ENCODE measurements at regions of chr16 and their contacts with region 1.

Region 1: DNA sequence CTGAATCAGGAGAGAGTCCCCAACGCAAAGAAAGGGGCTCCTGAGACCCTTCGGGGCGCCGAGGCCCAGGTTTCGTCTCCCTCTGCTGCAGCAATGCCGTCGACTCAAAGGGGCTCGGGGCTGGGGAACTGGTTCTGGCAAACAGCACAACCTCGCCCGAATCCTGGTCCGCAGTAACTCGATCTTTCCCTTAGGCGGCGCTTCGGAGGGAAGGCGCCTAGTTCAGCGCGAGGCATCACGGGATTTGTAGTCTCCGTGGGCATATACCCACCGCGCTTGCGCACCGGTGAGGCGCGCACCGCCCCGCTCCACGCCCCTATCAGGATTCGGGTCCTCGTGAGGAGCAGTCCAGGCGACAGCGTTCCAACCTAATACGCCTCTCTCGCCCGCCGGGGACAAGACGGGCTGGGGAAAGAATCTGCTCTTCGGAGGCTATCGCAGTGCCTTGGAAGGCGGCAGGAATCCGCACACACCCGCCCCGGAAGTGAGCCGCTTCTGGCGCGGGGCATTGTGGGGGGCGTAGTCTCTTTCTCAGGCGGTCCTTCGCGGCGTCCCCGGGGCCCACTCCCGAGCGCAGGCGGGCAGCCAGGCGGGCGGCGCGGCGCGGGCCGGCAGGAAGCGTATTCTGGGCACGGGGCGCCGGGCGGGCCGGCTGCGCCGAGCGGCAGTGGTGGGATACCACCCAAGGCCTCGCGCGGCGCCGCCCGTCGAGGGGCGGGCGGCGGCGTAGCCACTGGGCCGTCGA is at the start of gene THAP11:
- DNase-seq: peak; percentile 97
- H3K4me3 ChIP-seq: peak within 1 kb of the TSS; percentile 61 to 94 (median 78)
- H3K27ac ChIP-seq: peak within 1 kb of the TSS; percentile 96 to 99 (median 99)
- H3K4me1 ChIP-seq: peaks cover 0 to 42% (median 40%) of the 10 kb centered on the region in 4 donors
- H3K27me3 ChIP-seq: no peaks in the 10 kb centered on the region
- CTCF ChIP-seq: peak; percentile 79 to 93 (median 88)
- EP300 ChIP-seq: no peak
- POLR2A ChIP-seq: no peak
- total RNA-seq, gene THAP11: 63.9 to 85.6 (median 75.2) TPM

Region 2: DNA sequence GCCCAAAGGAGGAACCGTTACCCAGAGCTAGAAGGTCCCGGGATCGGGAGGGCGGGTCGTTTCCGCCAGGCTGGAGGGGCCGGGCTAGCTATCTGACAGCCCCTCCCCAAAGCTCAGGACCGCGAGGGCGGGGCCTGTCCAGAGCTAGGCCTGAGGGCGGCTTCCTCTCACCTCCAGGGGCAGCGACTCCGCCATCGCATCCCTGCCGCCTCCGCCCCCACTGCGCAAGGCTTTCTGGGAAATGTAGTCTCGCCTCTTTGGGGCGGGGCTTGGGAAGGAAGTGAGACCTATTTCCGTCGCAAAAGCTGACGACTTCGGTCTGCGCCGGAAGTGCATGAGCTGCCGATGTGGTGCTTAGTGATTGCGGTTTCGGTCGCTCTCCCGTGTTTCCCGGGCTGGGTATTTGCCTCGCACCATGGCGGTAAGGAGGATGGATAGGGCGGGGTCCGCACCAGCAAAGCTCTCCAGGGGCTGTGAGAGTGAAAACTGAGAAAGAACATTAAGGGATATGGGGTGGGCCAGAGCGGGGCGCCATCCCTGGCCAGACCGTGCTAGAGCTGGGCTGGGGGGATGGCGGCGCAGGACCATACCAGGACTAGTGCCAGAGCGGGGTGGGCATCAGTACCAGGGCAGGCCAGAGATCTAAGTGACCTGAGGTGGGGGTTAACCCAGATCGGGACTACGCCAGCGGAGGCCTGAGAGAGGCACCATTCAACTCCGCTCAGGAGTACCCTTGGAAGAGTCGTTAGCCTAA is 615.0 kb before region 1 on chr16 and contains the start of gene TMEM208:
- intact Hi-C with region 1: loop called (anchors 5 kb)
- DNase-seq: peak; percentile 99
- H3K4me3 ChIP-seq: peak within 1 kb of the TSS; percentile 86 to 99 (median 90)
- H3K27ac ChIP-seq: peak within 1 kb of the TSS; percentile 81 to 85 (median 83)
- H3K4me1 ChIP-seq: peaks cover 0 to 26% (median 21%) of the 10 kb centered on the region in 4 donors
- H3K27me3 ChIP-seq: no peaks in the 10 kb centered on the region
- CTCF ChIP-seq: peak in 1 of 4 experiments; percentile 7
- EP300 ChIP-seq: peak in 1 of 4 donors; percentile 46
- POLR2A ChIP-seq: peak; percentile 73 to 83
- total RNA-seq, gene TMEM208: 15.3 to 31.4 (median 24.2) TPM

Region 3: GRCh38 chr16:67806428-67807147 is 35.3 kb before region 1 on chr16 and contains the starts of genes RANBP10 and TSNAXIP1:
- intact Hi-C with region 1: loop called (anchors 2 kb)
- DNase-seq: peak; percentile 99
- H3K4me3 ChIP-seq: peak within 1 kb of the TSS; percentile 83 to 99 (median 96)
- H3K27ac ChIP-seq: peak within 1 kb of the TSS; percentile 80 to 92 (median 86)
- H3K4me1 ChIP-seq: peaks cover 0 to 28% (median 22%) of the 10 kb centered on the region in 4 donors
- H3K27me3 ChIP-seq: no peaks in the 10 kb centered on the region
- CTCF ChIP-seq: no peak
- EP300 ChIP-seq: no peak
- POLR2A ChIP-seq: peak; percentile 39 to 75
- total RNA-seq, gene RANBP10: 7.1 to 10.0 (median 7.6) TPM
- total RNA-seq, gene TSNAXIP1: 1.1 to 2.9 (median 1.8) TPM

Region 4: DNA sequence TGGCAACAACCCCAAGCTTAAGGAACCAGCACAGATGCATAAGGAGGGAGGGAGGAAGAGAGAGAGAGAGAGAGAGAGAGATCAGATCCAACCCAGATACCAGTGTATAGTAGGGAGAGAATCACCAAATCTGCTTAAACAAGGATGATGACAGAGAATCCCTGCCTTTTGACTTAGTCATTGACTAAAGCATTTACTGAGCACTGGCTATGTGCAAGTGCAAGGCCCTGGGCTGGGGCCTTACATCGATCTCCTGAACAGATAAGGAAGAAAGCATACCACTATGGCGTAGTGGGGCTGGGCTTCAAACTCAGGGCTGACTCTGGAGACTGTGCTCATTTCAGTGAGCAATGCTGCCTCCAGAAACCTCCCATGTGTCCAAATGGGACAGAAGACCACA is 19.4 kb before region 1 on chr16:
- intact Hi-C with region 1: no loop called
- DNase-seq: no peak
- H3K4me3 ChIP-seq: no peak overlapping the region
- H3K27ac ChIP-seq: no peak overlapping the region
- H3K4me1 ChIP-seq: no peaks in the 10 kb centered on the region
- H3K27me3 ChIP-seq: no peaks in the 10 kb centered on the region
- CTCF ChIP-seq: no peak
- EP300 ChIP-seq: no peak
- POLR2A ChIP-seq: no peak

Region 5: DNA sequence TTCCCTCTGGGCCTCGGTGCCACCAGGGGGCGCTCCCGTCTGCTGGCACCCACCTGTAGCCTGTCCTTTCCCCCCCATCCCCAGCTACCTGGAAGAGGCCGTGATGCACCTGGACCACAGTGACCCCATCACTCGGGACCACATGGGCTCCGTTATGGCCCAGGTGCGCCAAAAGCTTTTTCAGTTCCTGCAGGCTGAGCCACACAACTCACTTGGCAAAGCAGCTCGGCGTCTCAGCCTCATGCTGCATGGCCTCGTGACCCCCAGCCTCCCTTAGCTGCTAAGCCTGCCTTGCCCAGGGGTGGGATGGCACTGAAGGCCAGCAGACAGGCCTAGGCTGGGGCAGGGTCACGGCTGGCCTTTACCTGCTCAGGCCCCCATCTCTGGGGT is 41.9 kb after region 1 on chr16:
- intact Hi-C with region 1: loop called (anchors 2 kb)
- DNase-seq: peak; percentile 80
- H3K4me3 ChIP-seq: no peak overlapping the region
- H3K27ac ChIP-seq: peak overlapping the region; percentile 64 to 70 (median 68)
- H3K4me1 ChIP-seq: peaks cover 0 to 13% (median 9%) of the 10 kb centered on the region in 4 donors
- H3K27me3 ChIP-seq: no peaks in the 10 kb centered on the region
- CTCF ChIP-seq: peak; percentile 76 to 91 (median 86)
- EP300 ChIP-seq: no peak
- POLR2A ChIP-seq: no peak

Region 6: GRCh38 chr16:67892899-67893742 is 51.2 kb after region 1 on chr16 and contains the start of gene PSKH1:
- intact Hi-C with region 1: loop called (anchors 2 kb)
- DNase-seq: peak; percentile 98
- H3K4me3 ChIP-seq: peak within 1 kb of the TSS; percentile 88 to 100 (median 95)
- H3K27ac ChIP-seq: peak within 1 kb of the TSS; percentile 97 to 99 (median 98)
- H3K4me1 ChIP-seq: peaks cover 0 to 42% (median 37%) of the 10 kb centered on the region in 4 donors
- H3K27me3 ChIP-seq: no peaks in the 10 kb centered on the region
- CTCF ChIP-seq: peak in 1 of 4 experiments; percentile 8
- EP300 ChIP-seq: no peak
- POLR2A ChIP-seq: peak in 1 of 2 donors; percentile 39
- total RNA-seq, gene PSKH1: 13.9 to 20.8 (median 17.2) TPM

Region 7: DNA sequence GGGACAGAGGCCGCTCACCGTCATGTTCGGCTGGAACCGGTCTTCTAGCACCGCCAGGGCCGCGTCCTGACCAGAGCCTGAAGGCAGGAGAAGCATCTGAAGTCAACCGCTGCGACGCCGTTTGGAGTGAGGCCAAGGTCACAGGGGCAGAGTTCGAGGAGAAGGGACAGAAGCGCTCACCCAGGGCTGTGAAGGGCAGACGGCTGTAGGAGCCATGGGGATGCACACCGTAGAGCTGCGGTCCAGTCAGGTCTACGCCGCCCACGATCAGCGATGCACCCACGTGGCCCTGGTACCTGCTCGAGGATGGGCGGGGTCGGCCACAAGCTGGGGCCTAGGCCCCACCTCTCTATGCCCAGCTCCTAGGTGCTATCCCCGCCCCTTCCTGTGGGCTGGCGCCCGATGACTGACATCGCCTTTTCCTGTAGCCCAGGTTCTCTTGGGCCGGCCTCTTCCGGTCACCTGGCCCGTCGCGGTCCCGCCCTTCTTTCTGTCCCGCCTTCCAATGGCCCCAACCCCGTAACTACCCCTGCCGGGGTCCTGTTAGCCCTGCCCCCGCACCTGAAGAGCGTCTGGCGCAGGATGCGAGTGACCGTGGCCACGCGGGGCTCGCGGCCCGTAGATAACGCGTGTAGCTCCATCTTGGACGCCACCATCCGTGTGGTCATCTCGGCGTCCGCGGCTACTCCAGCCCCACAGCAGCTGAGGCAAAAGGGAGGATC is 93.6 kb after region 1 on chr16:
- intact Hi-C with region 1: loop called (anchors 5 kb)
- DNase-seq: peak; percentile 97
- H3K4me3 ChIP-seq: peak overlapping the region; percentile 77 to 89 (median 84)
- H3K27ac ChIP-seq: peak overlapping the region; percentile 91 to 97 (median 94)
- H3K4me1 ChIP-seq: peaks cover 0 to 34% (median 28%) of the 10 kb centered on the region in 4 donors
- H3K27me3 ChIP-seq: no peaks in the 10 kb centered on the region
- CTCF ChIP-seq: no peak
- EP300 ChIP-seq: no peak
- POLR2A ChIP-seq: peak; percentile 79 to 81